ENCODE measurements at regions of chr18 and their contacts with region 1.

Region 1: DNA sequence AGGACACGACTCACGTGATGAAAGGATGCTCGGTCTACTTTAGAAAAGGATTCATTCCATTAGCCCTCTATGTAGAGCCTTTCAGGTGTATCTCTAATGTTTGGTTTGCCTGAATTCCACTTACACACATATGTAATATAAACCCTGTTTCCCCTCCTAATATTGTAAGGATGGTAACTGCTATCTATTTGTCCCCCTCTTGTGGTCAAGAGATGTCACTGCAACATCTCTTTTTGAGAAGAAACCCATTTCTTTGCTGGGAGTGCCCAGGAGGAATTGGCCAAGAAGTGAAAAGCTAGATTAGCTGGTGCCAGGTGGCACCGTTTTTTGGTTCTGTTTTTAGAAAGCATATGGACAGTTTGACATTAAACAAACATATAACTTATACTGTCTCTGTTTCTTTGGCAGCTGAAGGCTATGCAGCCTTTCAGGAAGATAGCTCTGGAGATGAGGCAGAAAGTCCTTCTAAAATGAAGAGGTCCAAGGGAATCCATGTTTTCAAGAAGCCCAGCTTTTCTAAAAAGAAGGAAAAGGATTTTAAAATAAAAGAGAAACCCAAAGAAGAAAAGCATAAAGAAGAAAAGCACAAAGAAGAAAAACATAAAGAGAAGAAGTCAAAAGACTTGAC is 41.2 kb downstream of the RALBP1 start:
- DNase-seq: peak in 6 of 9 donors; percentile 11 to 57 (median 48)
- ATAC-seq: peak; percentile 80
- H3K4me3 ChIP-seq: no peak overlapping the region
- H3K4me3 Mint-ChIP-seq: no peak overlapping the region
- H3K27ac ChIP-seq: no peak overlapping the region
- H3K27ac Mint-ChIP-seq: peak overlapping the region in 1 of 9 donors; percentile 31
- H3K4me1 ChIP-seq: no peaks in the 10 kb centered on the region
- H3K4me1 Mint-ChIP-seq: peaks cover 0 to 14% (median 6%) of the 10 kb centered on the region in 7 donors
- H3K27me3 ChIP-seq: no peaks in the 10 kb centered on the region
- H3K27me3 Mint-ChIP-seq: no peaks in the 10 kb centered on the region

Region 2: GRCh38 chr18:8654503-8655451 is 861.8 kb before region 1 on chr18:
- CTCF ChIA-PET with region 1: interaction called, 4 read pairs
- POLR2A ChIA-PET with region 1: no interaction called
- intact Hi-C with region 1: loop called in 1 of 2 experiments (anchors 1 kb)
- DNase-seq: peak in 4 of 9 donors; percentile 19 to 42 (median 34)
- ATAC-seq: no peak
- H3K4me3 ChIP-seq: no peak overlapping the region
- H3K4me3 Mint-ChIP-seq: no peak overlapping the region
- H3K27ac ChIP-seq: no peak overlapping the region
- H3K27ac Mint-ChIP-seq: no peak overlapping the region
- H3K4me1 ChIP-seq: no peaks in the 10 kb centered on the region
- H3K4me1 Mint-ChIP-seq: peaks cover 0 to 1% (median 0%) of the 10 kb centered on the region in 7 donors
- H3K27me3 ChIP-seq: no peaks in the 10 kb centered on the region
- H3K27me3 Mint-ChIP-seq: peaks cover 13 to 36% (median 27%) of the 10 kb centered on the region in 5 donors

Region 3: DNA sequence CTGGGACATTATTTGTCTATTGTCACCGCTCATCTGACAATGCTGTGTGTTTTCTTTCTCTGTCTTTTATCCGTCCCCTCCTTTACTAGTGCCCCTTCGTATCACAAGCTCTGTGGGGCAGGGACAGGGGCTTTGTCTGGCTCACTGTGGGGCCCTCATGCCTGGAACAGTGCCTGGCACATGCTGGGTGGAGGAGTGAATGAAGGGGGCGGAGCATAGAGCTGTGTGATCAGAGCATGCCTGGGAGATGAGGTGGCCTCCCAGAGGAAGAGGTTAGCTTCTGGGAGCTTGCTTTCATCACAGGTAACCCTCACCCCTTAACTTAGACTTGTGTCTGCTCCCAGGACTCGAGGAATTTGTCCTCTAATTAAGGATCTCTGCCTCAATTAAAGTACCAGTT is 794.8 kb before region 1 on chr18:
- CTCF ChIA-PET with region 1: no interaction called
- POLR2A ChIA-PET with region 1: no interaction called
- intact Hi-C with region 1: no loop called
- DNase-seq: no peak
- ATAC-seq: no peak
- H3K4me3 ChIP-seq: no peak overlapping the region
- H3K4me3 Mint-ChIP-seq: peak overlapping the region in 1 of 10 donors; percentile 18
- H3K27ac ChIP-seq: no peak overlapping the region
- H3K27ac Mint-ChIP-seq: no peak overlapping the region
- H3K4me1 ChIP-seq: no peaks in the 10 kb centered on the region
- H3K4me1 Mint-ChIP-seq: no peaks in the 10 kb centered on the region
- H3K27me3 ChIP-seq: no peaks in the 10 kb centered on the region
- H3K27me3 Mint-ChIP-seq: peaks cover 7 to 19% (median 14%) of the 10 kb centered on the region in 5 donors

Region 4: DNA sequence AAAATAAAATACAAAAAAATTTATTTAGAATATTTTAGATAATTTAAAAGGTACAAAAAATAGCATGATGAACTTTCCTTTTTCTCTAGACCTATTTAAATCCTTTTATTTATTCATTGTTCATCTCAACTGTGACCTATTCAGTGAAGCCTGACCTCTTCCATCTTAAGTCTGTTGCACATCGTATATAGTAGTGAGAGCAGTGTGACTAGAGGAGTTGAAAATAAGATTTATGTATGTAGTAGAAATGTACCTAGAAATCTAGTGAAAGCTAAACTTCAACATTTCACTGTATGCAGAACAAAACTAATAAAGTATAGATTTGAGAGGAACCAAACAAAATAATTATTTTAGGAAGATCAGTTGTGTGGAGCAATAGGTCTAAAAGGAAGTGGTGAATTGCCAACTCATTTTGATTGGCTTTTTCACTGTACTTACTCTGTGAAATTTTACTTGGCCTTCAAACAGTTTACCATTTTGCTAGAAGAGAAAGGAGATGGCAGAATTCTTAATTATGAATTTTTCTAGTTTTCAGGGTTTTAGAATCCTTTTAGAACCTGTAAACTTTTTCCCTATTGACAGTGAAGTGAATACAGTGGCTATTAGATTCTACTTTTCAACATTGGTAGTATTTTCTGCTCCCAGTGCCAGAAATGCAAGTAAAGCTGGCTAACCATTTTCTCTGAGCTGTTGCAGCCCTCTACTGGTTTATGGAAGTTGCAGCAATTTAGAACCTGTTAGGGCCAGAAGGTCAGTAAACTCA is 368.9 kb before region 1 on chr18:
- CTCF ChIA-PET with region 1: no interaction called
- POLR2A ChIA-PET with region 1: no interaction called
- intact Hi-C with region 1: loop called in 1 of 2 experiments (anchors 2 kb)
- DNase-seq: peak in 7 of 9 donors; percentile 35 to 66 (median 49)
- ATAC-seq: peak; percentile 81
- H3K4me3 ChIP-seq: no peak overlapping the region
- H3K4me3 Mint-ChIP-seq: peak overlapping the region in 9 of 10 donors; percentile 3 to 79 (median 42)
- H3K27ac ChIP-seq: peak overlapping the region; percentile 30
- H3K27ac Mint-ChIP-seq: peak overlapping the region; percentile 21 to 90 (median 66)
- H3K4me1 ChIP-seq: peaks cover 18 to 59% of the 10 kb centered on the region in 2 donors
- H3K4me1 Mint-ChIP-seq: peaks cover 54 to 93% (median 84%) of the 10 kb centered on the region in 7 donors
- H3K27me3 ChIP-seq: no peaks in the 10 kb centered on the region
- H3K27me3 Mint-ChIP-seq: no peaks in the 10 kb centered on the region

Region 5: DNA sequence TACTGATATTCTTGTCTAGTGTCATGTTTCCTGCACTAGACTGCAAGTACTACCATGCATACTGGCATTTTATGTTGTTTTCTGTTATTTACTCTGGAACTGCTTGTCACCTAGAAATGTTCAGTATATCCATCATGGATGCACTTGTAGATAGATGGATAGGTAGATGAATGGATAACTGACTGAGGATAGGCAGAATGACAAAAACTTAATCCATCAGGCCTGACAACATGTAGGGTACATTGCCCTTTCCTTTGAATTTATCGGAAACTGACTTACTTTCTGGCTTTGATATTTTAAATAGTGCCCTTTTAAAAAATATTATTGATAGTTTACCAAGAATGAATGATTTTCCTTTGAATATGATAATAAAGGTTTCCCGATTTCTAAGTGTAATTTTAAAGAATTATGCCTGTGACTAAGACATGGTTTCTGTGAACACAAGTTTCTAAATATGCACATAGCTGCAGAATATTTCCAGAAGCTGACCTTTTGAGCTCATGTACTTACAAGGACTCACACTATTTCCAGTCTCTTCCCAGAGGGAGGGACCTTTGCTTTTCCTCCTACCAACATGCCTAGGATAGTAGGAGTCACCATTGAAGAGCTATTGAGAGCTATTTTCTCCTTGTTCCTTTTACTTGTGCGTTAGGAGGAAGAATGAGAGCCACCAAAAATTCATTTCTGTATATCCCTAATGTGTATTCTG is 298.7 kb before region 1 on chr18:
- CTCF ChIA-PET with region 1: interaction called, 4 read pairs
- POLR2A ChIA-PET with region 1: no interaction called
- intact Hi-C with region 1: loop called (anchors 5 to 10 kb)
- DNase-seq: no peak
- ATAC-seq: no peak
- H3K4me3 ChIP-seq: no peak overlapping the region
- H3K4me3 Mint-ChIP-seq: no peak overlapping the region
- H3K27ac ChIP-seq: no peak overlapping the region
- H3K27ac Mint-ChIP-seq: peak overlapping the region in 1 of 9 donors; percentile 39
- H3K4me1 ChIP-seq: no peaks in the 10 kb centered on the region
- H3K4me1 Mint-ChIP-seq: peaks cover 2 to 16% (median 11%) of the 10 kb centered on the region in 7 donors
- H3K27me3 ChIP-seq: no peaks in the 10 kb centered on the region
- H3K27me3 Mint-ChIP-seq: no peaks in the 10 kb centered on the region

Region 6: GRCh38 chr18:9334329-9334972 is 182.1 kb before region 1 on chr18 and contains the start of gene TWSG1:
- CTCF ChIA-PET with region 1: no interaction called
- POLR2A ChIA-PET with region 1: no interaction called
- intact Hi-C with region 1: loop called (anchors 1 kb)
- DNase-seq: peak; percentile 86 to 94 (median 90)
- ATAC-seq: peak; percentile 94
- H3K4me3 ChIP-seq: peak within 1 kb of the TSS; percentile 90
- H3K4me3 Mint-ChIP-seq: peak within 1 kb of the TSS; percentile 86 to 94 (median 92)
- H3K27ac ChIP-seq: peak within 1 kb of the TSS; percentile 74
- H3K27ac Mint-ChIP-seq: peak within 1 kb of the TSS; percentile 63 to 97 (median 88)
- H3K4me1 ChIP-seq: peaks cover 0 to 8% of the 10 kb centered on the region in 2 donors
- H3K4me1 Mint-ChIP-seq: peaks cover 1 to 33% (median 24%) of the 10 kb centered on the region in 7 donors
- H3K27me3 ChIP-seq: no peaks in the 10 kb centered on the region
- H3K27me3 Mint-ChIP-seq: peaks cover 0 to 35% (median 0%) of the 10 kb centered on the region in 5 donors
- total RNA-seq, gene TWSG1: 2.4 to 7.6 (median 5.8) TPM

Region 7: GRCh38 chr18:9433671-9434121 is 82.9 kb before region 1 on chr18:
- CTCF ChIA-PET with region 1: no interaction called
- POLR2A ChIA-PET with region 1: no interaction called
- intact Hi-C with region 1: no loop called
- DNase-seq: no peak
- ATAC-seq: peak; percentile 38
- H3K4me3 ChIP-seq: no peak overlapping the region
- H3K4me3 Mint-ChIP-seq: peak overlapping the region in 5 of 10 donors; percentile 0 to 48 (median 33)
- H3K27ac ChIP-seq: no peak overlapping the region
- H3K27ac Mint-ChIP-seq: peak overlapping the region in 1 of 9 donors; percentile 6
- H3K4me1 ChIP-seq: no peaks in the 10 kb centered on the region
- H3K4me1 Mint-ChIP-seq: peaks cover 0 to 8% (median 7%) of the 10 kb centered on the region in 7 donors
- H3K27me3 ChIP-seq: no peaks in the 10 kb centered on the region
- H3K27me3 Mint-ChIP-seq: peaks cover 3 to 11% (median 7%) of the 10 kb centered on the region in 5 donors

Region 8: GRCh38 chr18:9474983-9475642 is 41.4 kb before region 1 on chr18 and contains the start of gene RALBP1:
- CTCF ChIA-PET with region 1: interaction called, 4 read pairs
- POLR2A ChIA-PET with region 1: no interaction called
- intact Hi-C with region 1: loop called (anchors 1 kb)
- DNase-seq: peak; percentile 92 to 98 (median 96)
- ATAC-seq: peak; percentile 99
- H3K4me3 ChIP-seq: peak within 1 kb of the TSS; percentile 88
- H3K4me3 Mint-ChIP-seq: peak within 1 kb of the TSS; percentile 84 to 99 (median 97)
- H3K27ac ChIP-seq: peak within 1 kb of the TSS; percentile 81
- H3K27ac Mint-ChIP-seq: peak within 1 kb of the TSS; percentile 82 to 97 (median 94)
- H3K4me1 ChIP-seq: peaks cover 0 to 14% of the 10 kb centered on the region in 2 donors
- H3K4me1 Mint-ChIP-seq: peaks cover 21 to 41% (median 30%) of the 10 kb centered on the region in 7 donors
- H3K27me3 ChIP-seq: no peaks in the 10 kb centered on the region
- H3K27me3 Mint-ChIP-seq: peaks cover 0 to 24% (median 5%) of the 10 kb centered on the region in 5 donors
- total RNA-seq, gene RALBP1: 20.3 to 47.8 (median 42.2) TPM